ENCODE measurements at regions of chr9 and their contacts with region 1.

Region 1: GRCh38 chr9:77456829-77457437 is 191.2 kb downstream of the GNA14 start:
- DNase-seq: peak; percentile 93
- H3K4me3 Mint-ChIP-seq: no peak overlapping the region
- H3K27ac Mint-ChIP-seq: no peak overlapping the region
- H3K4me1 Mint-ChIP-seq: peaks cover 10% of the 10 kb centered on the region
- H3K27me3 Mint-ChIP-seq: peaks cover 12% of the 10 kb centered on the region
- CTCF ChIP-seq: peak; percentile 77

Region 2: DNA sequence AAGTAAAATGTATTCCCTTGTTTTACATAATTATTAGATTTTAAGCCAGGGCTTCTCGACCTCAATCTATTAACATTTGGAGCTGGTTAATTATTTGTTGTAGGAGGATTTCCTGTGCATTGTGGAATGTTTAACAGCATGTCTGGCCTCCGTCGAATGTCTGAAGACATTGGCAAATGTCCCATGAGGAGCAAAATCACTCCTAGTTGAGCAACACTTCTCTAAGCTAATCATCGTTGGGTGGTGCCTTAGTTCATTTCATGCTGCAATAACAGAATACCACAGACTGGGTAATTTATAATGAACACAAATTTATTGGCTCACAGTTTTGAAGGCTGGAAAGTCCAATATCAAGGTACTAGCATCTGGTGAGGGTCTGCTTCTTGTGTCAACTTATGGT is 293.0 kb before region 1 on chr9:
- CTCF ChIA-PET with region 1: interaction called, 10 read pairs
- POLR2A ChIA-PET with region 1: no interaction called
- intact Hi-C with region 1: loop called (anchors 10 kb)
- DNase-seq: peak; percentile 81
- H3K4me3 Mint-ChIP-seq: peak overlapping the region; percentile 46
- H3K27ac Mint-ChIP-seq: peak overlapping the region; percentile 84
- H3K4me1 Mint-ChIP-seq: peaks cover 39% of the 10 kb centered on the region
- H3K27me3 Mint-ChIP-seq: no peaks in the 10 kb centered on the region
- CTCF ChIP-seq: no peak

Region 3: DNA sequence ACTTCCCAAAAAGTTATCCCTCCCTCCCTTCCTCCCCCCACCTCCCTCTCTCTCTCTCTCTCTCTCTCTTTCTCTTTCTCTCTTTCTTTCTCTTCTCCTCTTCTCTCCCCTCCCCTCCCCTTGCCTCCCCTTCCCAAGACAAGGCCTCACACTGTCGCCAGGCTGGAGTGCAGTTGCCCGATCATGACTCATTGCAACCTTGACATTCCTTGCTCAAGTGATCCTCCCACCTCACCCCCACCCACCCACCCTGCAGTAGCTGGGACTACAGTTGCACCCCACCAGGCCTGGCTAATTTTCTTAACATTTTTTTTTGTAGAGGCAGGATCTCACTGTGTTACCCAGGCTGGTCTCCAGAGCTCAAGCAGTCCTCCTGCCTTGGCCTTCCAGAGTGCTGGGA is 246.8 kb before region 1 on chr9:
- CTCF ChIA-PET with region 1: no interaction called
- POLR2A ChIA-PET with region 1: no interaction called
- intact Hi-C with region 1: no loop called
- DNase-seq: no peak
- H3K4me3 Mint-ChIP-seq: no peak overlapping the region
- H3K27ac Mint-ChIP-seq: no peak overlapping the region
- H3K4me1 Mint-ChIP-seq: no peaks in the 10 kb centered on the region
- H3K27me3 Mint-ChIP-seq: no peaks in the 10 kb centered on the region
- CTCF ChIP-seq: no peak

Region 4: DNA sequence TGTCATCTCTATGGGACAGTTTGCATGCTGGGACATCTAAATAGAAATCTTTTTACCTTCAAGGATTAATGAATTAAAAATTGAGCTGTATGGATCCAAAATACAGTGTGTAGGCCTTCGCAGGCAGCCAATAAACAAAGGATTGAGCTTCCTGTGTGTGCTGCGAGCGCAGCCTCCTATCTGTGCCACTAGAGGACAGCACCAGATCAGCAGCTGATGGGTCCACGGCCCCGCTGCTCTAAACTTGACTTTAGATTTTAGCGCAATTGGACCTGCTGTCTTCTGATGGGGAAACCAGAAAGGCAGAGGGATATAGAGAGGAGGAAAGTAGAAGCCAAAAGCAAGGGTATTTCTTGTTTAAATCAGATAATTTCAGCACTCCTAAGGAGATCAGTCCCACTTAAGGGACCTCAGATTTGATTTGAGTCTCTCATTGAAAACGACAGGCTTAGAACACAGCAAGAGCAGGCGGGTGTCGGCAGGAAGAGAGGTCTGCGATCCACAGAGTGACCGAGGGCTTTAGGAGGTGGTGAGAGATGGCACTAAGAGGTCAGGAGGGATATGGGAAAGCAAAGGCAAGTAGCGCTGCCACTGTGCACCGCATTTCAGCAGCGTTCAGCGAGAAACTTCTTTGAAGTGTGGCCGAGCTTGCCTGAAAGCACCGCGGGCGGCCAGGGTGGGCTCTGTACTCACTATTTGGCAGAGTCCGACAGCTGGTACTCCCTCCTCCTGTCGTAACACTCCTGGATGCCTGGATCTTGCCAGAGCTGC is 23.1 kb before region 1 on chr9:
- CTCF ChIA-PET with region 1: interaction called, 121 read pairs
- POLR2A ChIA-PET with region 1: no interaction called
- intact Hi-C with region 1: loop called (anchors 1 kb)
- DNase-seq: peak; percentile 61
- H3K4me3 Mint-ChIP-seq: no peak overlapping the region
- H3K27ac Mint-ChIP-seq: no peak overlapping the region
- H3K4me1 Mint-ChIP-seq: peaks cover 4% of the 10 kb centered on the region
- H3K27me3 Mint-ChIP-seq: no peaks in the 10 kb centered on the region
- CTCF ChIP-seq: peak; percentile 98

Region 5: DNA sequence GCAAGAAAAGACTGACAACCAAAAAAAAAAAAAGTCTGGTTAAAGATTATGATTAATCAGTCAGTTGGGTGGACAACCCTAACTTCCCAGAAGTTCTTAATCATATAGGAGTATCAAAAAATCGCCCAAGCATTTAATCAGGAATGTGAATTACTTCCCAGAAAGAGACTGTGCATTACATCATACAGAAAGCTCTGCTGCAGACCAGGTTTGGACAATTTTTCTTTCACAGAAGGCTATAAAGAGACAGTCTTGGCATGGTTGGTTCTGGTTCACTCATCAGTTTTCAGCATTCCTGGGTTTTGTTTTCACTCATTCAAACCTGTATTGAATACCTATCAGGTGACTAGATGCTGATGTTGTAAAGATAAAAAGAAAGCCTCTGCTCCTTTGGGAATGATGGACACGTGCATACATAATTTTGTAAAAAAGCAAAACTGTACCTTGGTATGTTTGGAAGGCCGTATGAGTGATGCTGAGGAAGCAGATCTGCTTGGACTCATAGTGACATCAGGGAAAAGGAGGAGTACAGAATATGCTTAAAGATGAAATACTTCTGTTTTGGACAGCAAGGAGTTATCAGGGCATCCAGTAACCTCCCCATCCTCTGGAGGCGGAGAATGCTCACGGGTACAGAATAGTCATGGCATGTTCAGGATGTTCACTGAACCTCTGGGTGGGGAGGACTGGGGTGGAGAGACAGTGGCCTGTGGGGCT is 12.7 kb after region 1 on chr9:
- CTCF ChIA-PET with region 1: interaction called, 125 read pairs
- POLR2A ChIA-PET with region 1: no interaction called
- intact Hi-C with region 1: no loop called
- DNase-seq: no peak
- H3K4me3 Mint-ChIP-seq: no peak overlapping the region
- H3K27ac Mint-ChIP-seq: no peak overlapping the region
- H3K4me1 Mint-ChIP-seq: no peaks in the 10 kb centered on the region
- H3K27me3 Mint-ChIP-seq: no peaks in the 10 kb centered on the region
- CTCF ChIP-seq: no peak

Region 6: GRCh38 chr9:77495834-77496671 is 39.1 kb after region 1 on chr9:
- CTCF ChIA-PET with region 1: interaction called, 13 read pairs
- POLR2A ChIA-PET with region 1: no interaction called
- intact Hi-C with region 1: no loop called
- DNase-seq: no peak
- H3K4me3 Mint-ChIP-seq: no peak overlapping the region
- H3K27ac Mint-ChIP-seq: no peak overlapping the region
- H3K4me1 Mint-ChIP-seq: no peaks in the 10 kb centered on the region
- H3K27me3 Mint-ChIP-seq: no peaks in the 10 kb centered on the region
- CTCF ChIP-seq: no peak

Region 7: GRCh38 chr9:77738932-77739331 is 282.0 kb after region 1 on chr9:
- CTCF ChIA-PET with region 1: interaction called, 16 read pairs
- POLR2A ChIA-PET with region 1: no interaction called
- intact Hi-C with region 1: no loop called
- DNase-seq: no peak
- H3K4me3 Mint-ChIP-seq: no peak overlapping the region
- H3K27ac Mint-ChIP-seq: no peak overlapping the region
- H3K4me1 Mint-ChIP-seq: no peaks in the 10 kb centered on the region
- H3K27me3 Mint-ChIP-seq: no peaks in the 10 kb centered on the region
- CTCF ChIP-seq: no peak

Region 8: GRCh38 chr9:77764894-77765780 is 308.2 kb after region 1 on chr9:
- CTCF ChIA-PET with region 1: interaction called, 16 read pairs
- POLR2A ChIA-PET with region 1: no interaction called
- intact Hi-C with region 1: loop called (anchors 5 kb)
- DNase-seq: peak; percentile 40
- H3K4me3 Mint-ChIP-seq: no peak overlapping the region
- H3K27ac Mint-ChIP-seq: no peak overlapping the region
- H3K4me1 Mint-ChIP-seq: no peaks in the 10 kb centered on the region
- H3K27me3 Mint-ChIP-seq: no peaks in the 10 kb centered on the region
- CTCF ChIP-seq: peak; percentile 41